HepG2 (cell line): ENCODE measurements at regions of chr2 and their contacts with region 1.

Region 1: DNA sequence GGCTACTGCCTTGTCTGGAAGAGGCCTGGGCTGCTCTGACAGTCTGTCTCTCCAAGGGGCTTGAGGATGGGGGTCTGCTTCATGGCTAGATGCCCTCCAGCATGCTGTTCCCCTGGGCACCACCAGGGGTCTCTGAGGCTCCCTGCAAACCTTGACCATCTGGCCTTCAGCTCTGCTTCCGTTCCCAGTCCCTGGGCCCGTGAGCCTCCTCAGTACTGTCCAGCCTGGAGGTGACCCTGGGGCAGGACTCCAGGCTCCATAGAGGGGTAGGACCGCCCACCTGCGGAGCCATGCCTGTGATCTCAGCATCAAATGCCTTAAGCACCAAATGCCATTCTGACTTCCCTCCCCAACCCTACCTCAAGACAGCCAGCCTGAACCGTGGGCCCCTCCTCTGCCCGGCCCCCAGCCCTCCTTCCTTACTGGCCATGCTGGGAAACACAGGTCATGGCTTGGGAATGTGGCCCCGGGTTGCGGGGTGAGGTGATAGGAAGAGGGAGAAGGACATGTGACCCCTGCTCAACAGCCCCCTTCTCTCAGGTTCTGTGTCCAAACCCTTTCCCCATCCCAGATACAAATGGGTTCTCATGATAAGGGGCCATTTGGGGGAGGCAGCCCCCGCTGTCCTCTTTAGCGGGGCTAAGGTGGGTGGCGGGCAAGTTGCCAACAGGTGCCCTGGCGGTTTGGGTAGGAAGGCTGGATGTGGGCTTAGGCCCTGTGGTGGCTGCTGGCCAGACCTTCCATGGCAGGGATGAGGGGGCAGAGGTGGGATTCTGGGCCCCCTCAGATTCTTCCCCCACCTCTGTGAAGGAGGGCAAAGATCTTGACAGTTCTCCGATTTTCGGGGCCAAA is 25.0 kb downstream of the SPEG start:
- DNase-seq: peak; percentile 58
- ATAC-seq: peak; percentile 85
- H3K4me3 ChIP-seq: no peak overlapping the region
- H3K27ac ChIP-seq: no peak overlapping the region
- H3K4me1 ChIP-seq: peaks cover 10% of the 10 kb centered on the region; the same call in 1 of the 2 replicates
- H3K27me3 ChIP-seq: peaks cover 4 to 74% of the 10 kb centered on the region in 2 experiments; a peak in 4 of 5 replicates
- CTCF ChIP-seq: peak; percentile 91
- EP300 ChIP-seq: no peak
- POLR2A ChIP-seq: no peak
- RAD21 ChIP-seq: peak; percentile 51; the same call in 1 of the 2 replicates

Region 2: GRCh38 chr2:219402665-219403515 is 56.8 kb before region 1 on chr2:
- CTCF ChIA-PET with region 1: interaction called, 3 read pairs
- POLR2A ChIA-PET with region 1: no interaction called
- in situ Hi-C with region 1: no loop called
- intact Hi-C with region 1: loop called (anchors 2 kb)
- DNase-seq: peak; percentile 67
- ATAC-seq: peak; percentile 78
- H3K4me3 ChIP-seq: no peak overlapping the region
- H3K27ac ChIP-seq: no peak overlapping the region
- H3K4me1 ChIP-seq: peaks cover 42% of the 10 kb centered on the region
- H3K27me3 ChIP-seq: peaks cover 2 to 31% of the 10 kb centered on the region in 2 experiments; a peak in 4 of 5 replicates
- CTCF ChIP-seq: peak; percentile 88
- EP300 ChIP-seq: no peak
- POLR2A ChIP-seq: no peak
- RAD21 ChIP-seq: peak; percentile 70

Region 3: GRCh38 chr2:219430633-219431615 is 28.8 kb before region 1 on chr2:
- CTCF ChIA-PET with region 1: no interaction called
- POLR2A ChIA-PET with region 1: no interaction called
- in situ Hi-C with region 1: no loop called
- intact Hi-C with region 1: loop called (anchors 2 kb)
- DNase-seq: peak; percentile 21
- ATAC-seq: peak; percentile 91
- H3K4me3 ChIP-seq: no peak overlapping the region
- H3K27ac ChIP-seq: no peak overlapping the region
- H3K4me1 ChIP-seq: no peaks in the 10 kb centered on the region
- H3K27me3 ChIP-seq: peaks cover 16 to 62% of the 10 kb centered on the region in 2 experiments
- CTCF ChIP-seq: peak; percentile 77
- EP300 ChIP-seq: no peak
- POLR2A ChIP-seq: no peak
- RAD21 ChIP-seq: peak; percentile 64

Region 4: GRCh38 chr2:219475697-219476651 is 16.3 kb after region 1 on chr2:
- CTCF ChIA-PET with region 1: no interaction called
- POLR2A ChIA-PET with region 1: no interaction called
- in situ Hi-C with region 1: no loop called
- intact Hi-C with region 1: no loop called
- DNase-seq: peak; percentile 60
- ATAC-seq: peak; percentile 84
- H3K4me3 ChIP-seq: no peak overlapping the region
- H3K27ac ChIP-seq: no peak overlapping the region
- H3K4me1 ChIP-seq: no peaks in the 10 kb centered on the region
- H3K27me3 ChIP-seq: peaks cover 19 to 82% of the 10 kb centered on the region in 2 experiments
- CTCF ChIP-seq: peak; percentile 93
- EP300 ChIP-seq: no peak
- POLR2A ChIP-seq: no peak
- RAD21 ChIP-seq: peak; percentile 84